ENCODE measurements at regions of chr13 and their contacts with region 1.

Region 1: GRCh38 chr13:27362064-27362883 is 62.1 kb upstream of the GTF3A start:
- DNase-seq: peak; percentile 86 to 88
- H3K4me3 ChIP-seq: peak overlapping the region; percentile 41 to 51
- H3K27ac ChIP-seq: no peak overlapping the region
- H3K4me1 ChIP-seq: peaks cover 0 to 10% (median 8%) of the 10 kb centered on the region in 4 donors
- H3K27me3 ChIP-seq: peaks cover 0 to 12% of the 10 kb centered on the region in 2 donors
- CTCF ChIP-seq: peak; percentile 92 to 94

Region 2: DNA sequence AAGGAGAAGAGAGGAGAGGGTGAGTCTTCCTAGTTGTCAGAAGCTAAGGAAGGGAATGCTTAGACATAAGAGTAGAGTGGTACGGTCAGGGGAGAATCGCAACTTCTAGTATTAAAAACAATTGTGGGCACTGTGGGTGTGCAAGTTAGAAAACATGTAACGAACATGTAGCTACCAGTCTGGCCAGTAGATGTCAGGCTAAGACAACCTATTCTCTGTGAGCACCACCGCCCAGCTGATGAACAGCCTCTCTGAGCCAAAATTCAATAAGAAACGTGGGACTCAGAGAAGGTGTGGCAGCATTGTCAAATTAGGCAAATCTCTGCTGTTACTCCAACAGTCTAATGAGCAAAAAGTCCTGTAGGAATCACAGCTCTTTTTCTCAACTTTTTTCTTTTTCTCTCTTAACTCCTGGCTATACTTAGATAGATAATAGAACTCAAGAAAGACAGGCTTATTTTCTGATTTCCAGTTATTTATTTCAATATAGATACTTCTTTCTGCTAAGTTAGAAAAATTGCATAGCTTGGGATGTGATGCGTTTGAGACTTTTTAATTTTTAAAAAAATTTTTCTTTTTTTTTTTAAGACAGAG is 376.9 kb before region 1 on chr13:
- intact Hi-C with region 1: loop called (anchors 2 kb)
- DNase-seq: peak; percentile 76 to 79
- H3K4me3 ChIP-seq: no peak overlapping the region
- H3K27ac ChIP-seq: peak overlapping the region in 1 of 2 donors; percentile 75
- H3K4me1 ChIP-seq: peaks cover 0 to 31% (median 9%) of the 10 kb centered on the region in 4 donors
- H3K27me3 ChIP-seq: peaks cover 0 to 2% of the 10 kb centered on the region in 2 donors
- CTCF ChIP-seq: peak; percentile 72 to 91

Region 3: GRCh38 chr13:27276188-27276587 is 86.1 kb before region 1 on chr13:
- intact Hi-C with region 1: loop called (anchors 5 kb)
- DNase-seq: no peak
- H3K4me3 ChIP-seq: no peak overlapping the region
- H3K27ac ChIP-seq: peak overlapping the region; percentile 36 to 70
- H3K4me1 ChIP-seq: peaks cover 4 to 37% (median 25%) of the 10 kb centered on the region in 4 donors
- H3K27me3 ChIP-seq: no peaks in the 10 kb centered on the region
- CTCF ChIP-seq: no peak

Region 4: GRCh38 chr13:27826379-27827353 is 464.4 kb after region 1 on chr13:
- intact Hi-C with region 1: loop called (anchors 5 kb)
- DNase-seq: peak; percentile 64 to 85
- H3K4me3 ChIP-seq: peak overlapping the region in 1 of 2 donors; percentile 27
- H3K27ac ChIP-seq: no peak overlapping the region
- H3K4me1 ChIP-seq: peaks cover 0 to 10% (median 6%) of the 10 kb centered on the region in 4 donors
- H3K27me3 ChIP-seq: peaks cover 0 to 65% of the 10 kb centered on the region in 2 donors
- CTCF ChIP-seq: peak; percentile 87 to 88

Region 5: GRCh38 chr13:27988520-27988919 is 626.2 kb after region 1 on chr13 and contains the start of gene URAD:
- intact Hi-C with region 1: loop called (anchors 5 kb)
- DNase-seq: peak in 1 of 2 donors; percentile 41
- H3K4me3 ChIP-seq: no peak within 1 kb of the TSS
- H3K27ac ChIP-seq: no peak within 1 kb of the TSS
- H3K4me1 ChIP-seq: no peaks in the 10 kb centered on the region
- H3K27me3 ChIP-seq: peaks cover 0 to 53% of the 10 kb centered on the region in 2 donors
- CTCF ChIP-seq: no peak